Lower leg skin (tissue), 4 donors: ENCODE measurements at regions of chr10 and their contacts with region 1.

Region 1: DNA sequence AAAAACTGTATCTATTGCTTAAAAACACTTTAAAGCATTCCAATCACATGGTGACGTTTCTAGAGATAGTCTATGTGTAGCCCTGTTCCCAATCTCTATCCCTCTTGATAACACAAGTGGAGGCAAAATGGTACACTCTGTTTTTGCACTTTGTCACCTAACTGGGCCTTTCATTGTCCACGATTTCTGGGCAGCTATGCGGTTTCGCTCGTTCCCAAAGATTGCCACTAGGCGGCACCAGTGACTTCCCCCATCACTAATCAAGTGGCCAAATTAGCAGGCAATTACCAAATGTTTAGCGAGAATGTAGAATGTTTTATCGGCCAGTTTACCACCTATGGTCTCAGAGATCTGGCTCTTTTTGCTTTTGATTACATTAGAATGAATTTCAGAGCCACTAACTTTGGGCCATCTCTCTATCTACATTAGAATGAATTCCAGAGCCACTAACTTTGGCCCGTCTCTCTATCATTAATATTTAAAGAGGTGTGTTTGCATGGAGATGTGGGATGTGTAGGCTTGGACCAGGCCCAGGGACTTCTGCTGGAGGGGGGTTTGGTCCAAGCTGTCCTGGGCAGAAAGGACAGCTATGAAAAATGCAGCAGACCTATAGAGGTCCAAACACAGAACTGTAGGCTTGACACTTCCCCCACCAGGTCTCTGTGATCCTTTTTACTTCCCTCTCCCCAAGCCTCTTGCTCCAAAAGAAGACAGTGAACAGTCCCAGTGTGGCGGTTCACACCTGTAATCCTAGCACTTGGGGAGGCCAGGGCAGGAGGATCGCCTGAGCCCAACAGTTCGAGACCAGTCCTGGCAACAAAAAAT is 90.1 kb downstream of the EPC1 start:
- DNase-seq: peak; percentile 58 to 94
- H3K4me3 ChIP-seq: no peak overlapping the region
- CTCF ChIP-seq: peak in 1 of 3 donors; percentile 78
- POLR2A ChIP-seq: no peak

Region 2: DNA sequence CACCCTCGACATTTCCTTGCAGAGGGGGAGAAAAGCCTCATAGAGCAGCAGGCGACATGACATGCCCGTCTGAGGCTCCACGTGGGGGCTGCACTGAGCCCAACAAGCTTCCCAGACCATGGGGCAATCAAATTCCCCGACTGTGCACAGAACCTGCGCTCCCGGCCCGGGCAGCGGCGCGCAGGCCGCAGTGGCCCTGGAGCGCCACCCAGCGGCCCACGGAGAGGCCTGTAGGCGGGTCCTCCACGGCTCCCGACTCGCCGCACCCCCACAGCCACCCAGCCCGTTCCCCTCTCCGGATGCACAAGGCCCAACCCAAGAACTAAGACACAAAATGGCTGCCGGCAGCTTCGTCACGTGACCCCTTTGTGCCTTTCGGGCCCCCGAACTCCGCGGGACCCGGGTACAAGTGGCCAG is 89.3 kb after region 1 on chr10:
- intact Hi-C with region 1: loop called (anchors 10 kb)
- DNase-seq: peak; percentile 95 to 99
- H3K4me3 ChIP-seq: peak overlapping the region; percentile 92
- CTCF ChIP-seq: peak in 1 of 3 donors; percentile 83
- POLR2A ChIP-seq: no peak